ENCODE measurements at regions of chr6 and their contacts with region 1.

Region 1: DNA sequence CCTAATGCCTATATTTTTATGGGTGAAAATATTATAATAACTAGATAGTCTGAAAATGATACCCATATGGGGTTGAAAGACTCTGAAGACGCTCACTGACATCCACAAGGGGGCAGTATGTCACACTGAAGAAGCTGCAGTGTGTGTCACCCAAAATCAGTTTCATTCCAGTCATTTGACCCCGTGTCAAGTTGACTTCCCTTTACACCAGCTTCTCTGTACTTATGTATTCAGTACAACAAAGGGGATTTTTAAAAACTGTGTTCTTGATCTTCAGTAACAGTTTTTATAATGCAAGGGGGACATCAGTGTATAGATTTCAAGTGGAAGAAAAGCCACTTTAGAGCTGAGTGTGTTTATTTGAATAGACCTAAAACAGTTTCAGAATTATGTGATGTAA is 19.3 kb downstream of the FAXC start:
- DNase-seq: peak; percentile 72
- ATAC-seq: peak; percentile 76
- H3K4me3 ChIP-seq: no peak overlapping the region
- H3K4me3 Mint-ChIP-seq: no peak overlapping the region
- H3K27ac ChIP-seq: no peak overlapping the region
- H3K27ac Mint-ChIP-seq: no peak overlapping the region
- H3K4me1 ChIP-seq: peaks cover 0 to 3% of the 10 kb centered on the region in 2 donors
- H3K4me1 Mint-ChIP-seq: peaks cover 12% of the 10 kb centered on the region
- H3K27me3 ChIP-seq: peaks cover 0 to 2% (median 1%) of the 10 kb centered on the region in 4 experiments
- H3K27me3 Mint-ChIP-seq: no peaks in the 10 kb centered on the region
- CTCF ChIP-seq: peak; percentile 89

Region 2: GRCh38 chr6:99318542-99318941 is 11.6 kb before region 1 on chr6:
- CTCF ChIA-PET with region 1: interaction called, 20 read pairs
- POLR2A ChIA-PET with region 1: no interaction called
- intact Hi-C with region 1: no loop called
- DNase-seq: no peak
- ATAC-seq: no peak
- H3K4me3 ChIP-seq: no peak overlapping the region
- H3K4me3 Mint-ChIP-seq: no peak overlapping the region
- H3K27ac ChIP-seq: no peak overlapping the region
- H3K27ac Mint-ChIP-seq: no peak overlapping the region
- H3K4me1 ChIP-seq: no peaks in the 10 kb centered on the region
- H3K4me1 Mint-ChIP-seq: no peaks in the 10 kb centered on the region
- H3K27me3 ChIP-seq: peaks cover 0 to 4% (median 1%) of the 10 kb centered on the region in 4 experiments
- H3K27me3 Mint-ChIP-seq: peaks cover 37% of the 10 kb centered on the region
- CTCF ChIP-seq: no peak

Region 3: DNA sequence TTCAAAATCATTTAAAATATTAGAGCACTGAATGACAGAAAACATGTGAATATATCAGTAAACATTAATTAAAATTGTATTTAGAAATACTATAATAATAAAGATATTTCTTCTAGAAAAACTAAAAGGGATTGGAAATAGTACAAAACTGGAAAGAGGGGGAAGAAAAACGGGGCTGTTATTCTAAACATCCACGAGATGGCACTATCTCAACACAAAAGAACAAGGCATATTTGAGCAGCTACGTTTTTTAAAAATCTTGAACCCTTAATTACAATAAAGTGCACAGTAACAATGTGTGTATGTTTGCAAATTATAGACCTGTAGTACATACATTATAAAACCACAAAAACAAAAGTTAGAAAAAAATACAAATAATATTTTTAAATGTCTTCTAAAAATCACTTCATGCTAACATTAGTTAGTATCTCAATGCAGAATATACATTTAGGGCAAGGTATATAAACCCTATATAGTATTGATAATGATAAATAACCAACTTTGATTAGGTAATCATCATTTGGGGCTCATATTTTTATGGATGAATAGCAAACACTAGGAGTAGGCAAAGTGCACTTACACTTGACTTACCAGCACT is 137.4 kb after region 1 on chr6:
- CTCF ChIA-PET with region 1: no interaction called
- POLR2A ChIA-PET with region 1: no interaction called
- intact Hi-C with region 1: no loop called
- DNase-seq: peak; percentile 48
- ATAC-seq: peak; percentile 17
- H3K4me3 ChIP-seq: no peak overlapping the region
- H3K4me3 Mint-ChIP-seq: no peak overlapping the region
- H3K27ac ChIP-seq: no peak overlapping the region
- H3K27ac Mint-ChIP-seq: no peak overlapping the region
- H3K4me1 ChIP-seq: no peaks in the 10 kb centered on the region
- H3K4me1 Mint-ChIP-seq: no peaks in the 10 kb centered on the region
- H3K27me3 ChIP-seq: no peaks in the 10 kb centered on the region
- H3K27me3 Mint-ChIP-seq: no peaks in the 10 kb centered on the region
- CTCF ChIP-seq: peak; percentile 92

Measured in B cell (primary cell).